Right lobe of liver (tissue), 6 donors: ENCODE measurements at regions of chr5 and their contacts with region 1.

Region 1: DNA sequence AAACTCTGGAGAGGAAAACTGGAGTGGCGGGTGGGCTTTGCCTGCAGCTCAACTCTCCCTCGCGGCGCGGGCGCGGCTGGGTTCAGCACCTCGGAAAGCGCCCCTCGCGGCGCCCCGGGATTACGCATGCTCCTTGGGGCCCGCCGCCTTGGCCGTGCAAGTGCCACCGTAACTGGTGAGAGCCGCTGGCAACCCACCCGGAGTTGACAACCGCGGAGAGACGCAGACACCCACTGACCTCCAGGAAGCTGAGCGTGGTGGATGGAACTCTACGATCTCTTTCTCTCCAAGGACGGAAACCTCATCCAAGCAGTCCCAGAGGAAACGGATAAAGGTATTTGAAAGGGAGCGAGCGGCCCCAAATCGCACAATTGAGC is 194 bp upstream of the RXFP3 start:
- DNase-seq: peak; percentile 55 to 64 (median 56)
- ATAC-seq: peak; percentile 70 to 87 (median 80)
- H3K4me3 ChIP-seq: peak overlapping the region; percentile 0 to 25 (median 21)
- H3K27ac ChIP-seq: no peak overlapping the region
- H3K4me1 ChIP-seq: peaks cover 0 to 10% (median 0%) of the 10 kb centered on the region in 4 donors
- H3K27me3 ChIP-seq: no peaks in the 10 kb centered on the region
- CTCF ChIP-seq: peak; percentile 9 to 26 (median 18)
- POLR2A ChIP-seq: no peak

Region 2: DNA sequence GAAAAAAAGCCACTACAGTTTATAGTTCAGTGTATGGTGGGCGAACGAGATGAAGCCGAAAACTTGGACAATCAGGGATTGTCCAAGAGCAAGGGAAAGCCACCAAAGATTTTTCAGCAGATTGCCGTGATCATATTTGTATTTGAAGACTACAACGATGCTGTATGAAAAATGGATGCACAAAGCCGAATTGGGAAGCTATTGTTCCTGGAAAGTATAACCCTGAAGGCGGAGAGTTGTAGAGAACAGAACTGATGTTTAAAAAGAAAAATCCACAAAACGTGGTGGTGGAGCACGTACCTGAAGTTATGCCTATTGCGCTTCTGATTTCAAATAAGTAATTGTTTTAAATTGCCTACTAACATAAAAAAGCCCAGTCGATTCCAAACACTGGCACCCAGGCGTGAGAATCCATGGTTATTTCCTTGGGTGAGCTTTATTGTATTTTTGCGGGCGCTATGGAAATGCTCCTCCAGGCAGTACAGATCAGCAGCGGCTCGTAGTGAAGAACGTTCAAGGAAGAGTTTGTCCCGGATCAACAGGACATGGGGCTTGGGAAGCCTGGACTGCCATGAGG is 496.0 kb before region 1 on chr5:
- intact Hi-C with region 1: loop called in 1 of 2 experiments (anchors 10 kb)
- DNase-seq: no peak
- ATAC-seq: no peak
- H3K4me3 ChIP-seq: peak overlapping the region; percentile 46 to 83 (median 65)
- H3K27ac ChIP-seq: peak overlapping the region; percentile 71 to 95 (median 75)
- H3K4me1 ChIP-seq: peaks cover 0 to 30% (median 16%) of the 10 kb centered on the region in 4 donors
- H3K27me3 ChIP-seq: no peaks in the 10 kb centered on the region
- CTCF ChIP-seq: no peak
- POLR2A ChIP-seq: no peak

Region 3: DNA sequence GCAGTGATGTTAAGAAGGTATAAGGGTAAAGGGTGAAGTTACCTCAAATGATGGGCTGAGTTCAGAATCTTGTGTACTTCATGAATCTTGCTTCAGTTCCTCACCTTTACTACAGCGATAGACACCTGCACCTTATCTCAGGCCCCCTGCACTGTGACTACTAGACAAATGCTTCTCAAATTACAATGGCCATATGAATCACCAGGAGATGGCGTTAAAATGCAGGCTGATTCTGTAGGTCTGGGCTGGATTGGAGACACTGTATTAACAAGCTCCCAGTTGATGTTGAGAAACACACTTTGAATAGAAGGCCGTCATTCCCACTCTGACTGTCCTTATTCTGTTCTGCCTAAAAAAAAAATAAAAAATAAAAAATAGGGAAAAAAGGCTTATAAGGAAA is 465.4 kb before region 1 on chr5:
- intact Hi-C with region 1: loop called in 1 of 2 experiments (anchors 10 kb)
- DNase-seq: no peak
- ATAC-seq: peak in 2 of 4 donors; percentile 23 to 48
- H3K4me3 ChIP-seq: no peak overlapping the region
- H3K27ac ChIP-seq: no peak overlapping the region
- H3K4me1 ChIP-seq: peaks cover 0 to 6% (median 0%) of the 10 kb centered on the region in 4 donors
- H3K27me3 ChIP-seq: no peaks in the 10 kb centered on the region
- CTCF ChIP-seq: peak in 3 of 4 donors; percentile 18 to 38 (median 26)
- POLR2A ChIP-seq: no peak

Region 4: GRCh38 chr5:34026089-34026761 is 90.2 kb after region 1 on chr5:
- intact Hi-C with region 1: no loop called
- DNase-seq: peak; percentile 75 to 91 (median 89)
- ATAC-seq: peak; percentile 93 to 99 (median 98)
- H3K4me3 ChIP-seq: no peak overlapping the region
- H3K27ac ChIP-seq: peak overlapping the region in 2 of 3 donors; percentile 58 to 65
- H3K4me1 ChIP-seq: peaks cover 0 to 42% (median 18%) of the 10 kb centered on the region in 4 donors
- H3K27me3 ChIP-seq: no peaks in the 10 kb centered on the region
- CTCF ChIP-seq: no peak
- POLR2A ChIP-seq: no peak